AG04449 (cell line): ENCODE measurements at regions of chr1 and their contacts with region 1.

Region 1: GRCh38 chr1:169367486-169368405 is at the starts of genes BLZF1 and NME7:
- DNase-seq: peak; percentile 74
- H3K4me3 ChIP-seq: peak within 1 kb of the TSS; percentile 87
- CTCF ChIP-seq: no peak

Region 2: DNA sequence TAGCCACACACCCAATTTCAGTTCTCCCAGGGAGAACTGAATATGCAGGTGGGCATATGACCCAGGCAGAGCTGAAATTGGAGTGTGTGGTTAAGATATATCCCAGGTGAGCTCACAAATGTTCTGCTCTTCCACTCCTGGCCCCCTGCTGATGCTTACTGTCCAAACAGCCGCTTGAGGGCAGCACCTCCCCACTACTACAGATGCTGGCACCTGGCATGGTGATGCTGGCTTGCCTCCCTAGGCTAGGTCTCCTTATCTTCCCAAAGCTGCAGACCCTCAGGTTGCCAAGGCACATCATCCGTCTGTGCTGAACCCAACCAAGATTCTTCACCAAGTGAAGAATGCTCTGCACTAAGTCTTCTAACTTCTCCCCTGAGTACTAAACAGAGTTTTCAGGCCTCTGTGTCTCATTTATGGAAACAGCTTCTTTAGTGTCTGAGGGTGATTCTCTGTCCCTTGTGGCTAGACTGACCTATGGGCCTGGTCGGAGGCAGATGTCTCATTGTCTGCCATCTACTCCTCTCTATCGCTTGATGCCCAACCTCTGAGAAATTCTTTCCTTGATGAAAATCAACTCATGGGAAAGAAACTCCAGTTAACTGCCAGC is 764.1 kb before region 1 on chr1:
- CTCF ChIA-PET with region 1: interaction called, 10 read pairs
- POLR2A ChIA-PET with region 1: interaction called, 4 read pairs
- DNase-seq: no peak
- H3K4me3 ChIP-seq: no peak overlapping the region
- CTCF ChIP-seq: peak; percentile 87